ENCODE measurements at regions of chr22 and their contacts with region 1.

Region 1: DNA sequence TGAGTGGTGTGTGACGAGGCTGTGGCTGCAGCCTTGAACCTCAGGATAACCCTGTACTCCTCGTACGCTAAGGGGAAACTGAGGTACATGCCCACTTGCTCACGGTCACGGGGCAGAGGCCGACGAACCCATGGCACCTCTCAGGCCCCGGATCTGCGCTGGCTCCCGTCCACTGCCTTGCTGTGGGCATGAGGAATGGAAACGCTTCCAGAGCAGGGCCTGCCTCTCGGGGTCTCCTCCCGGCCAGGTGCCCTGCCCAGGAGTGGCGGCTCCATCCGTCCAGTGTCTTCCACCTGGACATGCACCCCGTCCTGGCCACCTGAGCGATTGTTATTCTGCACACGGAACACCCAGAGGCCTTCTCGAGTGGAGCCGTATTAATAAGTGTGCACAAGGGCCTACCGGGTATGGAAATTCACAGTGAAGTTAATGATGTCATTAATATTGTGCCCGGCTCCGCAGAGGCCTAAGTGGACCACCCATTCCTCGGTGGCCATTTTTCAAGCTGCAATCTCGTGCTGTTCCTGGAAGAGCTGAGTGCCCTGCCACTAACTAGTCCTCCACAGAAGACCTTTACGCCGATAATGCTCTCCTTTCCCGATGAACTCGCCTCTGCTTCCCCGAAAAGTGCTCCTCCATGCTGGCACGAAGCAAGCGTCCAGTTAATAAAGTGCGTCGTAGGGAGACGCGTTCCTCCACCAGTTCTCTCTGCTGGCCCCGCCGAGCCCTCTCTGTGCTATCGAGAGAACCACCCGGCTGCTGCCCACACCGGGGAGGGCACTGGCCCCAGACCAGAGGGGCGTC is 927.9 kb downstream of the BRD1 start:
- DNase-seq: peak; percentile 57
- ATAC-seq: no peak
- H3K4me3 ChIP-seq: no peak overlapping the region
- H3K27ac ChIP-seq: no peak overlapping the region
- H3K4me1 ChIP-seq: no peaks in the 10 kb centered on the region
- H3K27me3 ChIP-seq: no peaks in the 10 kb centered on the region
- CTCF ChIP-seq: no peak

Region 2: GRCh38 chr22:48456449-48456848 is 443.3 kb before region 1 on chr22:
- intact Hi-C with region 1: loop called (anchors 10 kb)
- DNase-seq: no peak
- ATAC-seq: no peak
- H3K4me3 ChIP-seq: no peak overlapping the region
- H3K27ac ChIP-seq: no peak overlapping the region
- H3K4me1 ChIP-seq: no peaks in the 10 kb centered on the region
- H3K27me3 ChIP-seq: no peaks in the 10 kb centered on the region
- CTCF ChIP-seq: no peak

Region 3: GRCh38 chr22:48807155-48807554 is 92.6 kb before region 1 on chr22:
- intact Hi-C with region 1: no loop called
- DNase-seq: peak; percentile 43
- ATAC-seq: no peak
- H3K4me3 ChIP-seq: no peak overlapping the region
- H3K27ac ChIP-seq: no peak overlapping the region
- H3K4me1 ChIP-seq: no peaks in the 10 kb centered on the region
- H3K27me3 ChIP-seq: peaks cover 16% of the 10 kb centered on the region
- CTCF ChIP-seq: no peak